Spleen (tissue), 13 donors: ENCODE measurements at regions of chr12 and their contacts with region 1.

Region 1: GRCh38 chr12:46303039-46303666 is 34.3 kb upstream of the SLC38A1 start:
- DNase-seq: no peak
- H3K4me3 ChIP-seq: no peak overlapping the region
- H3K27ac ChIP-seq: no peak overlapping the region
- H3K4me1 ChIP-seq: peaks cover 7 to 30% (median 15%) of the 10 kb centered on the region in 6 donors
- H3K27me3 ChIP-seq: no peaks in the 10 kb centered on the region
- CTCF ChIP-seq: peak; percentile 34 to 82 (median 67)
- POLR2A ChIP-seq: no peak

Region 2: DNA sequence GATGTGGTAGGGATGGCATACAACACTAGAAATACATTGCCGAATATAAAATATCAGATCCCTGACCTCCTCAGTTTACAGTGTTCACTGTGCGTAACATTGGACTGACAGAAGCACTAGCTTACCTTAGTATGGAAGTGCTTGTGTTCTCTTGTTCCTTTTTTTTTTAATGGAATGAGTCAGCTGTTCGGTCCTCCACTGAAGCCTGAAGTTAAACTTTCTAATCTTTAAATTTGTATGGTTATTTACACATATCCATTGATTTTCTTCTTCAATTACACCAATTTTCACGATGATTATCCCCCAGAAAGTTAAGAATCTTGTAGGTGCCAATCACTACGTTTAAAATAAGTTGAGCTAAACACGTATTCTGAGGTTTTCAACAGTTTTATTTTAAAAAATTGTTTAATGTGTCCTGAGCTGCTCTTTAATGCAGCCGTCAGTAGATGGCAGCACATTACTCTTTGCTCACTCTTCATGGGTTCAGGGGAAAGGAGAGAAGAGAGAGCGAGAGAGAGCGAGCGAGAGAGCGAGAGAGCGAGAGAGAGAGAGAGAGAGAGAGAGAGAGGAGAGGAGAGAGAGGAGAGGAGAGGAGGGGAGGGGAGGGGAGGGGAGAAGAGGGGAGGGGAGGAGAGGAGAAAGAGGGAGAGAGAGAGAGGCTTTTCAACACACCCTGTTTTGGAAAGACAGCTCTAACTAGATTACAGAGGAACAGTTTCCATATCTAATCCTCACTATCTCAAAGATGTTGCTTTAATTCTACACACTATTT is 178.1 kb before region 1 on chr12:
- intact Hi-C with region 1: loop called (anchors 10 kb)
- DNase-seq: no peak
- H3K4me3 ChIP-seq: peak overlapping the region in 2 of 8 donors; percentile 24 to 40
- H3K27ac ChIP-seq: peak overlapping the region in 1 of 8 donors; percentile 22
- H3K4me1 ChIP-seq: peaks cover 0 to 8% (median 2%) of the 10 kb centered on the region in 6 donors
- H3K27me3 ChIP-seq: no peaks in the 10 kb centered on the region
- CTCF ChIP-seq: peak; percentile 32 to 86 (median 64)
- POLR2A ChIP-seq: no peak

Region 3: DNA sequence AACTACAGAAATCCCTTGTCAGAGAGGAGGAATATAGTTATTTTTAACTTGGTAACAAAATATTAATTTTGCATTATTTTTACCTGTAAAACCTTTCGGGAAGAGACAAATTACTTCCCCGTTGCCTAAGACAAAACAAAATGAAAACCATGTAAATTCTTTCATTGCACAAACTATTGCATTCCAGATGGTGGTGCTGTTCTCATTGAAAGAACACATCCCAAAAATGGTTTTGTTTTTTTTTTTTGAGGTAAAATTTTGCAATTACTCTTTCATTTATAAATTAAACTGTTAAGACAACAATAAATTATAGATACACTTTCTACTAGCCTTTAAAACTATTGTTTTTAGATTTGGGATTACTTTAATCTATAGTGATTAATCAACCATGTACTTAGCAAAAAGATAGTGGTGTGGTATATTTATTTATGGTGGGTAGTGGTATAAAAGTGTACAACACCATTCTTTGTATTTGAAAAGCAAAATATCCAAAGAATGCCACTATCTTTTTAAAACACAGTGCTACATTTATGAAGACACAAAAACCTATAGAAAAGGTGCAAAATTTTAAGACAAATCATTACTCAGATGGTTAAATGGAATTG is 149.8 kb before region 1 on chr12:
- intact Hi-C with region 1: loop called (anchors 10 kb)
- DNase-seq: no peak
- H3K4me3 ChIP-seq: no peak overlapping the region
- H3K27ac ChIP-seq: no peak overlapping the region
- H3K4me1 ChIP-seq: peaks cover 0 to 19% (median 6%) of the 10 kb centered on the region in 6 donors
- H3K27me3 ChIP-seq: no peaks in the 10 kb centered on the region
- CTCF ChIP-seq: peak in 9 of 11 experiments; percentile 25 to 64 (median 53)
- POLR2A ChIP-seq: no peak

Region 4: GRCh38 chr12:46246021-46246700 is 57.0 kb before region 1 on chr12:
- intact Hi-C with region 1: no loop called
- DNase-seq: no peak
- H3K4me3 ChIP-seq: peak overlapping the region in 1 of 8 donors; percentile 9
- H3K27ac ChIP-seq: peak overlapping the region in 1 of 8 donors; percentile 26
- H3K4me1 ChIP-seq: peaks cover 5 to 62% (median 19%) of the 10 kb centered on the region in 6 donors
- H3K27me3 ChIP-seq: peaks cover 0 to 6% (median 0%) of the 10 kb centered on the region in 7 donors
- CTCF ChIP-seq: no peak
- POLR2A ChIP-seq: no peak